CD4-positive, alpha-beta memory T cell (primary cell): ENCODE measurements at regions of chr21 and their contacts with region 1.

Region 1: GRCh38 chr21:45140346-45140940 is 66.1 kb downstream of the ADARB1 start:
- DNase-seq: peak; percentile 58 to 72 (median 61)
- H3K4me3 ChIP-seq: no peak overlapping the region
- H3K4me3 Mint-ChIP-seq: no peak overlapping the region
- H3K27ac ChIP-seq: no peak overlapping the region
- H3K27ac Mint-ChIP-seq: peak overlapping the region in 3 of 7 donors; percentile 8 to 47 (median 12)
- H3K4me1 ChIP-seq: no peaks in the 10 kb centered on the region
- H3K4me1 Mint-ChIP-seq: peaks cover 6 to 22% (median 16%) of the 10 kb centered on the region in 4 donors
- H3K27me3 ChIP-seq: no peaks in the 10 kb centered on the region
- H3K27me3 Mint-ChIP-seq: no peaks in the 10 kb centered on the region

Region 2: GRCh38 chr21:44939532-44940115 is 200.8 kb before region 1 on chr21 and contains the start of gene SLX9:
- CTCF ChIA-PET with region 1: interaction called, 252 read pairs
- POLR2A ChIA-PET with region 1: no interaction called
- intact Hi-C with region 1: no loop called
- DNase-seq: peak; percentile 69 to 82 (median 76)
- H3K4me3 ChIP-seq: peak within 1 kb of the TSS; percentile 36 to 57
- H3K4me3 Mint-ChIP-seq: peak within 1 kb of the TSS; percentile 86 to 97 (median 90)
- H3K27ac ChIP-seq: peak within 1 kb of the TSS; percentile 46
- H3K27ac Mint-ChIP-seq: peak within 1 kb of the TSS; percentile 53 to 96 (median 88)
- H3K4me1 ChIP-seq: peaks cover 38% of the 10 kb centered on the region
- H3K4me1 Mint-ChIP-seq: peaks cover 23 to 56% (median 40%) of the 10 kb centered on the region in 4 donors
- H3K27me3 ChIP-seq: no peaks in the 10 kb centered on the region
- H3K27me3 Mint-ChIP-seq: no peaks in the 10 kb centered on the region
- total RNA-seq, gene SLX9: 17.7 to 21.6 TPM

Region 3: GRCh38 chr21:44958471-44959191 is 181.8 kb before region 1 on chr21:
- CTCF ChIA-PET with region 1: interaction called, 252 read pairs
- POLR2A ChIA-PET with region 1: no interaction called
- intact Hi-C with region 1: no loop called
- DNase-seq: no peak
- H3K4me3 ChIP-seq: no peak overlapping the region
- H3K4me3 Mint-ChIP-seq: no peak overlapping the region
- H3K27ac ChIP-seq: no peak overlapping the region
- H3K27ac Mint-ChIP-seq: no peak overlapping the region
- H3K4me1 ChIP-seq: no peaks in the 10 kb centered on the region
- H3K4me1 Mint-ChIP-seq: peaks cover 6 to 8% (median 7%) of the 10 kb centered on the region in 4 donors
- H3K27me3 ChIP-seq: no peaks in the 10 kb centered on the region
- H3K27me3 Mint-ChIP-seq: no peaks in the 10 kb centered on the region

Region 4: DNA sequence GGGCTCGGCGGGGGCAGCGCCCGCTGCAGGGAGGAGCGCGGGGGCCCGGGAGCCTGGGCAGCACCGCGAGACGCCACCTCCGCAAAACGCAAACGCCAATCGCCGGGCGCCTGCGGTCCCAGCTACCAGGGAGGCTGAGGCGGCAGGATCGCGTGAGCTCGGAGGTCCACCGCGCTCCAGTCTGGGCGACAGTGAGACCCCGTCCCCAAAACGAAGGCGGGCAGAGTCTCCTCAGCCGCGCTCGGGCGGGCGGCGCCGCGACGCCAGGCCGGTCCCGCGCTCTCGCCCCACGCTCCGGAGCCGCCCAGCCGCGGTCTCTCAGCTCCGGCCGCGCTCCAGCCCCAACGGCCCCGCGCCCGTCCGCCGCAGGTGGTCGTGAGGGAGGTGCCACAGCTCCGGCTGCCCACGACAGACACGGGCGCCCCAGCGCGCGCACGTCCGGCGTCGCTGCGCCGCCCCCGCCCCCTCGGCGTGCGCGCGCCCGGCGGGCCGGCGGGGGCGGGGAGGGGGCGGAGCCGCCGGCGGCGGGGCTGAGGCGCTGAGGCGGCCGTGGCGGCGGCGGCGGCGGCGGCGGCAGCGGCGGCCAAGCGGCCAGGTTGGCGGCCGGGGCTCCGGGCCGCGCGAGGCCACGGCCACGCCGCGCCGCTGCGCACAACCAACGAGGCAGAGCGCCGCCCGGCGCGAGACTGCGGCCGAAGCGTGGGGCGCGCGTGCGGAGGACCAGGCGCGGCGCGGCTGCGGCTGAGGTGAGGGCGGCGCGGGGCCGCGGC is 66.2 kb before region 1 on chr21 and contains the start of gene ADARB1:
- CTCF ChIA-PET with region 1: interaction called, 29 read pairs
- POLR2A ChIA-PET with region 1: interaction called, 4 read pairs
- intact Hi-C with region 1: no loop called
- DNase-seq: peak in 4 of 5 donors; percentile 65 to 79 (median 72)
- H3K4me3 ChIP-seq: peak within 1 kb of the TSS; percentile 18 to 52
- H3K4me3 Mint-ChIP-seq: peak within 1 kb of the TSS; percentile 92 to 99 (median 96)
- H3K27ac ChIP-seq: peak within 1 kb of the TSS; percentile 64
- H3K27ac Mint-ChIP-seq: peak within 1 kb of the TSS; percentile 92 to 99 (median 97)
- H3K4me1 ChIP-seq: peaks cover 44% of the 10 kb centered on the region
- H3K4me1 Mint-ChIP-seq: peaks cover 33 to 46% (median 39%) of the 10 kb centered on the region in 4 donors
- H3K27me3 ChIP-seq: no peaks in the 10 kb centered on the region
- H3K27me3 Mint-ChIP-seq: no peaks in the 10 kb centered on the region
- total RNA-seq, gene ADARB1: 49.7 to 50.0 TPM

Region 5: GRCh38 chr21:45110873-45111624 is 29.4 kb before region 1 on chr21:
- CTCF ChIA-PET with region 1: interaction called, 39 read pairs
- POLR2A ChIA-PET with region 1: no interaction called
- intact Hi-C with region 1: no loop called
- DNase-seq: no peak
- H3K4me3 ChIP-seq: no peak overlapping the region
- H3K4me3 Mint-ChIP-seq: peak overlapping the region in 3 of 8 donors; percentile 1 to 54 (median 21)
- H3K27ac ChIP-seq: no peak overlapping the region
- H3K27ac Mint-ChIP-seq: peak overlapping the region in 1 of 7 donors; percentile 37
- H3K4me1 ChIP-seq: peaks cover 36% of the 10 kb centered on the region
- H3K4me1 Mint-ChIP-seq: peaks cover 42 to 75% (median 59%) of the 10 kb centered on the region in 4 donors
- H3K27me3 ChIP-seq: no peaks in the 10 kb centered on the region
- H3K27me3 Mint-ChIP-seq: no peaks in the 10 kb centered on the region

Region 6: DNA sequence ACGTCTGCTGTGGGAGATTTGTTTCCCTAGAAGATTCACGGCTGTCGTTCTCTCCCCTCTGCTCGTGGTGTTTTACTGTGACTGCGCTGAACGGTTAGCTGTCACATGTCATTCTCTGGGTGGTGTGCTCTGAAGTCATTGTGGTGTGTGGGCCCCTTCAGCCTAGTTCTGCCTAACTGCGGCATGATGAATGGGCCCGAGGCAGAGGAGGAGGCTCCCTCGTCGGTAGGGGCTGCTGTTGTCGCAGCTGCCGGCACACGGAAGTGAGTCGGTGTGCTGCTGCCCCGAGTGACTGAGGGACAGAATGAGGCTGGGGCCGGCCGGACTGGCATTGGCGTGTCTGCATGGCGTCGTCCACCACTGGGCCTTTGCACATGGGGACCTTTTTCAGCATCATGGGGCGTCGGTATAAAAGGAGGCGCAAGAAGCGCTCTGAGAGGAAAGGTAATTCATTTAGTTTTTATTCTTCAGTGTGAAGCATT is 11.9 kb after region 1 on chr21:
- CTCF ChIA-PET with region 1: interaction called, 28 read pairs
- POLR2A ChIA-PET with region 1: no interaction called
- intact Hi-C with region 1: no loop called
- DNase-seq: peak; percentile 48 to 69 (median 60)
- H3K4me3 ChIP-seq: no peak overlapping the region
- H3K4me3 Mint-ChIP-seq: peak overlapping the region in 7 of 8 donors; percentile 28 to 81 (median 74)
- H3K27ac ChIP-seq: peak overlapping the region; percentile 20
- H3K27ac Mint-ChIP-seq: peak overlapping the region; percentile 71 to 92 (median 85)
- H3K4me1 ChIP-seq: peaks cover 38% of the 10 kb centered on the region
- H3K4me1 Mint-ChIP-seq: peaks cover 32 to 60% (median 47%) of the 10 kb centered on the region in 4 donors
- H3K27me3 ChIP-seq: no peaks in the 10 kb centered on the region
- H3K27me3 Mint-ChIP-seq: no peaks in the 10 kb centered on the region

Region 7: GRCh38 chr21:45316871-45317397 is 176.5 kb after region 1 on chr21:
- CTCF ChIA-PET with region 1: no interaction called
- POLR2A ChIA-PET with region 1: no interaction called
- intact Hi-C with region 1: no loop called
- DNase-seq: no peak
- H3K4me3 ChIP-seq: no peak overlapping the region
- H3K4me3 Mint-ChIP-seq: no peak overlapping the region
- H3K27ac ChIP-seq: no peak overlapping the region
- H3K27ac Mint-ChIP-seq: no peak overlapping the region
- H3K4me1 ChIP-seq: peaks cover 7% of the 10 kb centered on the region
- H3K4me1 Mint-ChIP-seq: peaks cover 0 to 4% (median 2%) of the 10 kb centered on the region in 4 donors
- H3K27me3 ChIP-seq: no peaks in the 10 kb centered on the region
- H3K27me3 Mint-ChIP-seq: peaks cover 1 to 8% of the 10 kb centered on the region in 2 donors

Region 8: DNA sequence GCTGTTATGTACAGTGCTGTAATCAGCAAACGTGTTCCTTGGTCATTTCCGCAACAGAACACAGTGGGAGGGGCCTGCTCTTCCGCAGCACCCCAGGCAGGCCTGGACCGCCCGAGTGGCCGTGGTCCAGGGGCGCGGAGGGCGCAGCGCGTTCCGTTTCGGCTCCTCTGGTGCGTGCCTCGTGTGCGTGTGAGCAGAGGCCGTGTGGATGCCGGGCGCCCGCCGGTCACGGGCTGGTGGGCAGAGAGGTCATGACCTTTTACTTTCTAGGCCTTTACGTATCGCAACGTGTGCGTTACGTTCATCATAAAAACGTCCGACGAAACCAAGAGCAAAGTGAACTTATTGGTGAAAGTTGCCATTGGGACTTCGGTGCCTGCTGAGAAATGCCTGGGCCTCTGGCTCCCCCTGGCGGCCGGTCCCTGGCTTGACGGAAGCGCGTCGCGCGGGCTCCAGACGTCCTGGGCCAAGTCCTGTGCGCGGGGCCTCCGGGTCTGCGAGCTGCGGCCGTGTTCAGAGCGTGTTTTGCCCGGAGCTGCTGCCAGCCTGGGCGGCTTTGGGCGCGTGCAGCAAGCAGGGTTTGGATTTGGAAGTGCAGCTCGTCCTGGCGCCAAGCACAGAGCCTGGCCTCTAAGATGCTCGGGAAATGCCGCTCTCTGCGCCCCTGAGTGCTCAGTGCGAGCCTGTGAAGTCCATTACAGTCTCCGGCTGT is 298.9 kb after region 1 on chr21:
- CTCF ChIA-PET with region 1: interaction called, 9 read pairs
- POLR2A ChIA-PET with region 1: no interaction called
- intact Hi-C with region 1: loop called (anchors 1 kb)
- DNase-seq: peak; percentile 76 to 84 (median 81)
- H3K4me3 ChIP-seq: peak overlapping the region in 1 of 2 donors; percentile 44
- H3K4me3 Mint-ChIP-seq: peak overlapping the region; percentile 57 to 78 (median 74)
- H3K27ac ChIP-seq: peak overlapping the region; percentile 43
- H3K27ac Mint-ChIP-seq: peak overlapping the region in 6 of 7 donors; percentile 41 to 90 (median 78)
- H3K4me1 ChIP-seq: peaks cover 10% of the 10 kb centered on the region
- H3K4me1 Mint-ChIP-seq: peaks cover 2 to 12% (median 6%) of the 10 kb centered on the region in 4 donors
- H3K27me3 ChIP-seq: no peaks in the 10 kb centered on the region
- H3K27me3 Mint-ChIP-seq: peaks cover 1 to 7% of the 10 kb centered on the region in 2 donors